ENCODE measurements at regions of chr12 and their contacts with region 1.

Region 1: GRCh38 chr12:55817346-55818139 is at the starts of genes ORMDL2 and SARNP:
- DNase-seq: peak; percentile 99
- ATAC-seq: peak; percentile 98
- H3K4me3 Mint-ChIP-seq: no peak within 1 kb of the TSS
- H3K27ac Mint-ChIP-seq: no peak within 1 kb of the TSS
- H3K4me1 Mint-ChIP-seq: peaks cover 46% of the 10 kb centered on the region
- H3K27me3 Mint-ChIP-seq: no peaks in the 10 kb centered on the region
- total RNA-seq, gene ORMDL2: 55.2 to 57.9 TPM
- total RNA-seq, gene SARNP: 91.1 to 94.8 TPM

Region 2: DNA sequence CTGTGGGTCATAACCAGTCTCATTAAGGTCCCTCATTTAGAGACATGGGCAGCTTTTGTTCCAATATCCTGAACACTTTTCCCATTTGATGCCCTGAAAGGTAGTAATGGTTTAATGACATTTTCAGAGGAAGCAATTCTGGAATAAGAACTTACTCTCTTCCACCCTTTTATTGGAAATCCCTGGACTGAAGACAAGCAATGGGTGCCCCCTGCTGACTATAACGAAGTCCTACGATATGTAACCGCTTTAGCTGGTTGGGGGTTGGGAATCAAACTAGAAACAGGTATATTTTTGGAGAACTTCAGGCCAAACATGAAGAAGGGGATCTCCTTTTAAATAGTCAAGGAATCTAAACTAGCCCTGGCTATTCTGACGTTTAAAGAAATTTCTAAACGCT is 20.5 kb before region 1 on chr12:
- CTCF ChIA-PET with region 1: interaction called, 31 read pairs
- POLR2A ChIA-PET with region 1: no interaction called
- DNase-seq: no peak
- ATAC-seq: no peak
- H3K4me3 Mint-ChIP-seq: no peak overlapping the region
- H3K27ac Mint-ChIP-seq: no peak overlapping the region
- H3K4me1 Mint-ChIP-seq: peaks cover 12% of the 10 kb centered on the region
- H3K27me3 Mint-ChIP-seq: no peaks in the 10 kb centered on the region

Region 3: DNA sequence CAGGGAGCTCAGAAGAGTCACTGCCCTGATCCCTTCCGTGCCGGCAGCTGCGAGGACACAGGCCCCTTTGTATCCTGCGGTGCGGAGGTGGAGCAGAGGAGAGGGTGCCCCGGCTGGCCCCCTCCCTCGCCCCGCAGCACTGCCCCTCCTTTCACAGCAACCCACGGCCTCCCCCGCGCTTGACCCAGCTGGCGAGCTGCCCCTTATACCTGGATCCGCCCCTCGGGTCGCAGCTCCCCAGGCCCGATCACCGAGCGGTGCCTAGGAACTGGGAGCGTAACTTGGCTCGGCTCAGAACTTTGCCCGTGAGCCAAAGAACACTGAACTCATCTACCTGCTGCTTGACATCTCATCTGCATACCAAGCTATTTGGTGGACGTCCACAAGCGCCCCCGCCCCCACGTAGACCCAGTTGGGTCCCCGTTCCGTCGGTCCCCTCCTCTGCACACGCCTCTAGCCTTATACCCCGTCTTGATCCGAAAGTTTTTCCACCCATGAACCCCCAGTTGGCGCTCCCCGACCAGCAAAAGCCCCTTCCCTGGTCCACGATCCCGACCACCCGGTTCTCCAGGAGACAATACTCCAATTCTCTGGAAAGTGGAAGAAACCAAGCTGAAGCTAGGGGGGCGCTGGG is 12.5 kb after region 1 on chr12:
- CTCF ChIA-PET with region 1: interaction called, 18 read pairs
- POLR2A ChIA-PET with region 1: interaction called, 41 read pairs
- DNase-seq: peak; percentile 55
- ATAC-seq: peak; percentile 35
- H3K4me3 Mint-ChIP-seq: peak overlapping the region; percentile 99
- H3K27ac Mint-ChIP-seq: peak overlapping the region; percentile 97
- H3K4me1 Mint-ChIP-seq: peaks cover 41% of the 10 kb centered on the region
- H3K27me3 Mint-ChIP-seq: no peaks in the 10 kb centered on the region

Region 4: DNA sequence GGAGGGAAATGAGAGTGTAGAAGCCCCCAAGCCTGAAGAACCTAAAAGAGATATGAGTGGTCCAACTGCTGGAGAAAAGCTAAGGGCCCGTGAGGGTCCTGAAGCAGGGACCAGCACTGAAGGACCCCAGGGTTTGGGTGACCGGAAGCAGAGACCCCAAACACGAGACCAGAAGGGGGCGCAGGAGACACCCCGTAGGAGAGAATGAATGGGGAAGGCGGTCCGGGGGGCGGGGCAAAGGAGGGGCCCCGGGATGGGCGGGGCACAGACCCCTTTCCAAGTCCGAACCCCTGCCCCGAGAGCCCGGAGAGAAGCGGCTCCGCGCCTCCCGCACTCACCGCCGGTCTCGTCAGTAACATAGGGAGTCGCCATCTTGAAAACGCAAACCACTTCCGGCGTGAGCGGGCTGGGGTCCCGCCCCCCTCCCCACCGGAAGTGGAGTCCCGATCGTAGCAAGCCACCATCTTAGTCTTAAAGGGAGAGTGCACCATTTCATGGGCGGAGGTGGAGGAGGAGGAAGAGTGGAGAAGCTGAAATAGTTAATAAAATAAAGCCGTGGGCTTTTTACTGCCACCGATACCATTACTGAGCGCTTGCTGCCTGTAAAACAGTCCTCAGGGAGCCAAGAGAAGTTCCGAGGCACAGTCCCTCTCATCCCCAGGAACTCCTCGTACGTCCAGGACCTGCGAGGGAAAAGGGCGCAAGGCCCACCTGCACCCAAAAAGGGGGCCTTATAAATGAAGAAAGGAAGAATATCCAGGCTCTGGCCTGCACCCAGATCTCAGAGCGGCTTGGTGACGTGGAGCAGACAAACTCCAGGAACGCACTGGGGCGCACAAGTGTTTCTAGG is 109.4 kb after region 1 on chr12:
- CTCF ChIA-PET with region 1: interaction called, 24 read pairs
- POLR2A ChIA-PET with region 1: interaction called, 62 read pairs
- DNase-seq: peak; percentile 97
- ATAC-seq: peak; percentile 43
- H3K4me3 Mint-ChIP-seq: peak overlapping the region; percentile 95
- H3K27ac Mint-ChIP-seq: peak overlapping the region; percentile 99
- H3K4me1 Mint-ChIP-seq: peaks cover 43% of the 10 kb centered on the region
- H3K27me3 Mint-ChIP-seq: no peaks in the 10 kb centered on the region

Region 5: DNA sequence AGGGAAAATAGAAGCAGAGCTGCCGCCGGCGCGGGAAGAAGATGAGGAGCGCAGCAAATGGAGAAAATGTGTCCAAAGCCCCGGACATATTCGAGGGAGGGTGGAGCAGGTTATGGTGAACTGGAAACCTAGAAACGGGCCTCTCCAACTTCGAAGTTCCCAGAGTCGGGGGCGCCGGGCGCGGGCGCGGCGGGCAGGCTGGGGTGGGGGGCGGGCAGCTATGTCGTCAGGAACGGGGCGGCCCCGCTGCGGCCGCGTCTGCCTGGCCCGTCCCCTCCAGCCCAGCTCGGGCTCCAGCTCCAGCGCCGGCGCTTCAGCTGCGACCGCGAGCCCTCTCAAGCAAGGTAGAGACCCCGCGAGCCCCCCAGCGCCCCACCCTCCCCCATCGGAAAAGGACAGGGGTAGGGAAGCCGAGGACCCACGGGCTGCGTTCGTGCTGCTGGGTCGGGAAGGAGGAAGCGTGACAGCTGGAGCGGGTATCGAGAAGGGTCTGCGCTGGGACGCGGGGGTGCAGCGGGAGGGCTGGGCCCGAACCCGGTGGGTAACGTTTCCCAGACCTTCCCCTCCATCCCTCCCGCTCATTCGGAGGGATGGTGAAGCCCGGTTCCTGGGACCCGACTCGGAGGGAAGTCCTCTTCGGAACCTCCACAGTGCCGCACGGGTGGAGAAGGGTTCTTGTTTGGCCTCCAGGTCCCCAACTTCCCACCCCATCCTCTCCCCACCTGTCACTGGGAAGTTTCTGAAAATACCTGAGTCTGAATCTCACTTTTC is 114.4 kb after region 1 on chr12:
- CTCF ChIA-PET with region 1: interaction called, 24 read pairs
- POLR2A ChIA-PET with region 1: interaction called, 62 read pairs
- DNase-seq: peak; percentile 42
- ATAC-seq: no peak
- H3K4me3 Mint-ChIP-seq: peak overlapping the region; percentile 95
- H3K27ac Mint-ChIP-seq: peak overlapping the region; percentile 99
- H3K4me1 Mint-ChIP-seq: peaks cover 53% of the 10 kb centered on the region
- H3K27me3 Mint-ChIP-seq: no peaks in the 10 kb centered on the region

Region 6: DNA sequence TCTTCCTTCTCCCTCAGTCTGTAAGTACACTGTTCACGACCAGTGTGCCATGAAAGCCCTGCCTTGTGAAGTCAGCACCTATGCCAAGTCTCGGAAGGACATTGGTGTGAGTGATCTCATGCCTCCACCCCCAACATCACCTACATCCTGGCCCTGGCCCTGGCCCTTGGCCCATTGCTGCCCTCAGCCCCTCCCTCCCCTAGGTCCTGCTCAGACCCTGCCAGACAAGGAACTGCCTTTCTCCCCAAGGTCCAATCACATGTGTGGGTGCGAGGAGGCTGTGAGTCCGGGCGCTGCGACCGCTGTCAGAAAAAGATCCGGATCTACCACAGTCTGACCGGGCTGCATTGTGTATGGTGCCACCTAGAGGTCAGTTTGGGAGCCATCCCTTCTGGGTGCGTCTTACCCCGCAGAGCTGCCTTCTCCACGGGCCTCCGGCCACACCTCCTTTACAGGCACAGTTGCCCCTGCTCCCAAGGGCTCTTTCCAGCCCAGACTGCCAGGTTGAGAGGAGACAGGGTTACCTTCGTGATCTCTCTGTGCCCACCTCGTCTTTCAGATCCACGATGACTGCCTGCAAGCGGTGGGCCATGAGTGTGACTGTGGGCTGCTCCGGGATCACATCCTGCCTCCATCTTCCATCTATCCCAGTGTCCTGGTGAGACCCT is 122.7 kb after region 1 on chr12:
- CTCF ChIA-PET with region 1: interaction called, 41 read pairs
- POLR2A ChIA-PET with region 1: interaction called, 17 read pairs
- DNase-seq: peak; percentile 90
- ATAC-seq: peak; percentile 93
- H3K4me3 Mint-ChIP-seq: no peak overlapping the region
- H3K27ac Mint-ChIP-seq: peak overlapping the region; percentile 69
- H3K4me1 Mint-ChIP-seq: peaks cover 67% of the 10 kb centered on the region
- H3K27me3 Mint-ChIP-seq: no peaks in the 10 kb centered on the region